Activated naive CD4-positive, alpha-beta T cell treated with anti-CD3 and anti-CD28 coated beads for 36 hours (primary cell): ENCODE measurements at regions of chr1 and their contacts with region 1.

Region 1: DNA sequence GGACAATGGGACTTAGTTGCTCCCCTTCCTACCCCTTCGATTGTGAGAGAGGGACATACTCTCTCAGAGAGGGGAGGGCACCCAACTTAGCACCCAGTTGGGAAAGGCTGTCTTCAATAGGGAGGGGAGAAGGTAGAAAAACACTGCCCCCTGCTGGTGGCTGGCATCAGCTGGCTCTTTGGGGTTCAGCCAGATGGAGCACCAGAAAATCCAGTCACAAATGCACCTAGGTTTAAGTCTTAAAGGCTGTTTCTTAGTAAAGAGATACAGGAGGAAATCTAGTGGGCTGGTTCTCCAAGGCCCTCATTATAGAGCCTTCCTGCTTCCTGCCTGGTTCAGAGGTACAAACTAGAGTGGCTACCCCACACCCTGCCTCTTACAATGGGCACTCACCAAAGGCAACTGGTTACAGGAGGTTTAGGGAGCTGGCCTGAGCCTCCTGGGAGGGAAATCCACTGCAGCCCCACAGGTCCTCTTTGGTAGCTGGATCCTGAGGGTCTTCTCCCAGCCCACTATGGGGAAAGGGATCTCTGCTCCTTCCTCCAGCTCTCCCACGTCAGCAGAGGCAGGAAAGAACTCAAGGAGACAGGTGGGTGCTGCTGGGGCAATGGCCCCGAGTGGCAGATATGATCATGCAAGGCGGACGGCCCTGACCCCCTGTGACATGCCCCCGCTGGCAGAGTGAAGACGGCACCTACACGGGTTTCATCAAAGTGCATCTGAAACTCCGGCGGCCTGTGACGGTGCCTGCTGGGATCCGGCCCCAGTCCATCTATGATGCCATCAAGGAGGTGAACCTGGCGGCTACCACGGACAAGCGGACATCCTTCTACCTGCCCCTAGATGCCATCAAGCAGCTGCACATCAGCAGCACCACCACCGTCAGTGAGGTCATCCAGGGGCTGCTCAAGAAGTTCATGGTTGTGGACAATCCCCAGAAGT is 28.3 kb downstream of the EIF2D start:
- DNase-seq: peak; percentile 95
- H3K4me3 Mint-ChIP-seq: peak overlapping the region; percentile 68
- H3K27ac Mint-ChIP-seq: peak overlapping the region; percentile 100
- H3K4me1 Mint-ChIP-seq: peaks cover 94% of the 10 kb centered on the region
- H3K27me3 Mint-ChIP-seq: no peaks in the 10 kb centered on the region

Region 2: GRCh38 chr1:206143537-206144172 is 440.3 kb before region 1 on chr1:
- CTCF ChIA-PET with region 1: no interaction called
- intact Hi-C with region 1: no loop called
- DNase-seq: no peak
- H3K4me3 Mint-ChIP-seq: no peak overlapping the region
- H3K27ac Mint-ChIP-seq: no peak overlapping the region
- H3K4me1 Mint-ChIP-seq: no peaks in the 10 kb centered on the region
- H3K27me3 Mint-ChIP-seq: peaks cover 2% of the 10 kb centered on the region

Region 3: DNA sequence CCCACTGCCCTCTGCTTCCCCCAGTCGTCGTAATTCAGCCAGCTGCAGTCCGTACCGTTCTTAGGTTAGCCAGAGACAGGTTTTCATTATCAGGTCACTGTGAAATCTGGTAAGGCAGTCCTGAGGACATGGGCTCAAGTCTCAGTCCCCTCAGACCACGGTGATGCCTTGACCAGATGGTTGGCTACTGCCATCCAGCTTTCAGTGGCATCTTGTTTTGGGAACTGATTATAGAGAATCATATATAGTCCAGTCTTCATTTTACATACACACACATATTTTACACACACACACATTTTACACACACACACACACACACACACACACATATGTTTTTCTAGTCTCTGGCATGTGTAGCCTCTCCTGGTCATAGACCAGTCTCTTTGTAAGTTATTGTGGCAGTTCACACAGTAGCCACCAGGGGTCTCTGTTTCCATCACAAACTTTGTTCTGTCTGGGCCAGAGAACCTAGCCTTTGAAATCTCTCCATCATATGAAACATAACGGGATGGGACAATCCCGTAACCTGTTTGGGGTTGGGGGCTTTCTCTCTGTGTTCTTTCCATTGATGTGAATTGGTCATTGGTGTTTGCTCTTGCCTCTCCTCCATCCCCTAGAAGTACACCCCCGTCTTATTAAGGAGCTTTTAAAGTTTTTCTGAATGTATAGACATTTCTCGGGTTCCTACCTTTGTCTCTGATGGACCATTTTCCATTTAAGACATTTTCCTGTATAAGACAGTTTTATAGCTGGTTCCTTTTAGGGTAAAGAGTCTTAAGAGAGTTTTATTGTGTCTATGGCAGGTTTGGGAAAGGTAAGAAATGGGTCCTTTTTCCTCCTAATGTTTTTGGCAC is 122.1 kb before region 1 on chr1:
- CTCF ChIA-PET with region 1: interaction called, 5 read pairs
- intact Hi-C with region 1: loop called (anchors 1 kb)
- DNase-seq: peak; percentile 92
- H3K4me3 Mint-ChIP-seq: no peak overlapping the region
- H3K27ac Mint-ChIP-seq: no peak overlapping the region
- H3K4me1 Mint-ChIP-seq: peaks cover 46% of the 10 kb centered on the region
- H3K27me3 Mint-ChIP-seq: no peaks in the 10 kb centered on the region

Region 4: DNA sequence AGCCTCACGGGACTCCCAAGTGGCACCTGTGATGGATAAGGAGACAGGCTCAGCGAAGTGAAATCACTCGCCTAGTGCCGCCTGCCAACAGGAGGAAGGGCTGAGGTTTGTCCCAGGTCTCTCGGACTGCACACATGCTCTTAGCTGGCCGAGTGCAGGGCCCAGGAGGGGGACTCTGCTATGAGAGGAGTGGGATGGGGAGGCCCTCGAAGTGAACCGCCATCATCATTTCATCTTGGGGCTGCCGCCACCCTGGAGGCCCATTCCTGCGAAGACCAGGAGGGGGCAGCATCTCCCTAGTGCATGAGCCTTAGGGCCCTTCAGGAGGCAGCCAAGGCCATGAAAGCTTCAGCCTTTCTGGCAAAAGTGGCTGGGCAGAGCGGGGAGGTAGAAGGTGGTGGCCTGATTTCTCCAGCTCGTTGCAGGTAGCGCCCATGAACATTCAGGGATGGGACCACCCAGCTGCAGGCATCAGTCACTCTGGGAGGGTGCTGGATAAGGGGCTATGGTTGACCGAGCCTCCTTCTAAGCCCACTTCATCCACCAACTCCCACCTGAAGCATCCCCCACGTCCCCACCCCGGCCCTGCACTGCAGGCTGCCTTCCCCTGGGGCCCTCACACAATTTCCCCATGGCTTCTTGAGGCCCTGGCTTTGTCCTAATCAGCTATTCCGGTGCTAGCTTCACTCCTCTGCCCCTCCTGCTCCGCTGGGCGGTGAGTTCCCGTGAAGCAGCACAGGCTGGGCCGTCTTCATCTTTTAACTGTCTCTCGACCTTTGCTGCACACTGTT is 93.8 kb before region 1 on chr1:
- CTCF ChIA-PET with region 1: interaction called, 25 read pairs
- intact Hi-C with region 1: loop called (anchors 1 kb)
- DNase-seq: peak; percentile 87
- H3K4me3 Mint-ChIP-seq: no peak overlapping the region
- H3K27ac Mint-ChIP-seq: no peak overlapping the region
- H3K4me1 Mint-ChIP-seq: no peaks in the 10 kb centered on the region
- H3K27me3 Mint-ChIP-seq: no peaks in the 10 kb centered on the region

Region 5: DNA sequence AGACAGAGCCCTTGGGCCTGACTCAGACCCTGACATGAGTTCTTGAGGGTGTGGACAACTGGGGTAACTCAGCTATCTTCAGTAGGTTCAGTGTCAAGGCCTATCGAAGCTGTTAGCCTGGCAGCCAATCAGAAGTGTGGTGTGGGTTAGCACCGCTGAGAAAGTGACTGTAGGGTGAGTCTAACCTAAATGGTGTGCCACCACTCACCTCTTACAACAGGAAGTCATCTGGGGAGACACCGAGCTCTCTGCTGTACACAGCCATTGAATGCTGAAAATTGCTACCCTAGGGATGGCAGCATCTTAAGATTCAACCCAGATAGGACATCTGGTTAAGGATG is 32.0 kb before region 1 on chr1:
- CTCF ChIA-PET with region 1: interaction called, 511 read pairs
- intact Hi-C with region 1: loop called (anchors 1 kb)
- DNase-seq: peak; percentile 93
- H3K4me3 Mint-ChIP-seq: peak overlapping the region; percentile 79
- H3K27ac Mint-ChIP-seq: peak overlapping the region; percentile 93
- H3K4me1 Mint-ChIP-seq: peaks cover 53% of the 10 kb centered on the region
- H3K27me3 Mint-ChIP-seq: no peaks in the 10 kb centered on the region

Region 6: GRCh38 chr1:206905280-206906164 is 321.5 kb after region 1 on chr1:
- CTCF ChIA-PET with region 1: no interaction called
- intact Hi-C with region 1: loop called (anchors 1 kb)
- DNase-seq: peak; percentile 88
- H3K4me3 Mint-ChIP-seq: peak overlapping the region; percentile 40
- H3K27ac Mint-ChIP-seq: peak overlapping the region; percentile 96
- H3K4me1 Mint-ChIP-seq: peaks cover 88% of the 10 kb centered on the region
- H3K27me3 Mint-ChIP-seq: no peaks in the 10 kb centered on the region